Kidney (tissue), 22 donors: ENCODE measurements at regions of chr13 and their contacts with region 1.

Region 1: GRCh38 chr13:37109051-37109678 is 3.7 kb upstream of the CSNK1A1L start:
- DNase-seq: peak in 2 of 5 donors; percentile 61 to 69
- H3K4me3 ChIP-seq: no peak overlapping the region
- H3K27ac ChIP-seq: no peak overlapping the region
- H3K4me1 ChIP-seq: no peaks in the 10 kb centered on the region
- H3K27me3 ChIP-seq: no peaks in the 10 kb centered on the region
- CTCF ChIP-seq: peak; percentile 31

Region 2: GRCh38 chr13:37395566-37395965 is 286.4 kb after region 1 on chr13:
- intact Hi-C with region 1: no loop called
- DNase-seq: no peak
- H3K4me3 ChIP-seq: no peak overlapping the region
- H3K27ac ChIP-seq: no peak overlapping the region
- H3K4me1 ChIP-seq: no peaks in the 10 kb centered on the region
- H3K27me3 ChIP-seq: no peaks in the 10 kb centered on the region
- CTCF ChIP-seq: no peak

Region 3: DNA sequence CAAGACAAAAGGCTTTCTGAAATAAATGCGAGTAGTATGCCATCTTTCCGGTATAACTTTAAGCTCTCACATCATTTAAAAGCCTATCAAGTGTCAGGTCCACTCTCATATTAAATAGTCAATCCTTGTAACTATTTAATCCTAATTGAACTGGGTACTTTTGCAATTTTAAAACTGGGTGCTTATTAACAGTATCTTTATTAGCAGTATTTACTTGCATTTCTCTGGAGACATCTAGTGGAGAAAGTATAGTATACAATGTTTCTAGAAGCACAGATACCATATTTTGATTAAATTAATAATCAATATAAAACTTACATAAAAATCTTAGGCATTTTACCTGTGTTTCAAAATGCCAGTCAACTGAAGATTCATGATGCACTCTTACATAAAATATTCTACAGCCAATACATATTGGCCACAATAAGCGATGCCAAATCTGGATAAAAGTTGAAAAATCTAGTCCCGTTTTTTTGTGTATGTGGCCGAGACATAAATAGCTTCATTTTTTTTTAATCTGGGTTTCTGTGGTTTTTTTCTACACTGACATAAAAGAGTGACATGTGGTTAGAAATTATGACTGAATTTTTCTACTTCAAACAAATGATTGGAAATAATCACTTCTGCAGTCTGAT is 493.7 kb after region 1 on chr13:
- intact Hi-C with region 1: loop called (anchors 5 kb)
- DNase-seq: peak in 1 of 5 donors; percentile 62
- H3K4me3 ChIP-seq: no peak overlapping the region
- H3K27ac ChIP-seq: no peak overlapping the region
- H3K4me1 ChIP-seq: no peaks in the 10 kb centered on the region
- H3K27me3 ChIP-seq: no peaks in the 10 kb centered on the region
- CTCF ChIP-seq: peak; percentile 13